Activated CD4-positive, alpha-beta memory T cell treated with anti-CD3 and anti-CD28 coated beads for 36 hours (primary cell): ENCODE measurements at regions of chr17 and their contacts with region 1.

Region 1: DNA sequence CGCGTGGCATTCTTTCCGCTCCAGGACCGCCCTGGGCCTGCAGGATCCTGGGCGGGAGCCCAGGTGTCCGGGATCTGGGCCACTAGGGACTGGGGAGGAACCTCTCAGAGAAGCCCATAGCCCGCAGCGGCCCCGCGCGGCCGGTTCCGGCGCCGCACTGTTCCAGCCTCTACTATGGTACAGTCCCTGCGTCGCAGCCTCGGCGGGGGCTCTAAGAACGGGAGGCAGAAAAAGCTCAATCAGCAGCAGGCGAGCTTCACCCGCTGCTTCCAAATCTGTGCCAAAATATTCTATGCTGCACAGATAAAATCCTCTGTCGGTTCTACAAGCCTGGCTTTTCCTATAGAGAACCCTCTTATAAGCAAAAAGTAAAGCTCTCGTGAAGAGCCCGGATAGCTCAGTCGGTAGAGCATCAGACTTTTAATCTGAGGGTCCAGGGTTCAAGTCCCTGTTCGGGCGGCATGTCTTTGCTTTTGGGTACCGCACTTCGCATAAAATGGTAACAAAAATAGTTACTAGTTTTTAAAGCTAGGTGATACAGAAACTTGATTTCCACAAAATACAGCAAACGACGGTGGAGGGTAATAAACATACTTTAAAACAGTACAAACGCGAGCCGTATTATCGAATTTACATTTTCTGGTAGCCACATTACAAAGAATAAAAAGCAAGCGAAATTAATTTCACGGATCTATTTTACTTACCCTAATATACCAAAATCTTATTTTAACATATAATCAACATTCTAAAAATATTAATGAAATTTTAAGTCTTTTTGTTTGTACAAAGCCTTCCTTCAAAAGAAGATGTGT is 661 bp upstream of the ALOXE3 start:
- DNase-seq: peak; percentile 90
- H3K4me3 Mint-ChIP-seq: peak overlapping the region; percentile 83
- H3K27ac Mint-ChIP-seq: peak overlapping the region; percentile 91
- H3K4me1 Mint-ChIP-seq: peaks cover 48% of the 10 kb centered on the region
- H3K27me3 Mint-ChIP-seq: peaks cover 56% of the 10 kb centered on the region

Region 2: GRCh38 chr17:7435221-7435675 is 683.7 kb before region 1 on chr17 and contains the start of gene TMEM102:
- CTCF ChIA-PET with region 1: no interaction called
- POLR2A ChIA-PET with region 1: no interaction called
- intact Hi-C with region 1: loop called (anchors 10 kb)
- DNase-seq: peak; percentile 99
- H3K4me3 Mint-ChIP-seq: peak within 1 kb of the TSS; percentile 91
- H3K27ac Mint-ChIP-seq: peak within 1 kb of the TSS; percentile 95
- H3K4me1 Mint-ChIP-seq: peaks cover 36% of the 10 kb centered on the region
- H3K27me3 Mint-ChIP-seq: peaks cover 15% of the 10 kb centered on the region
- total RNA-seq, gene TMEM102: 11.4 to 11.6 TPM

Region 3: GRCh38 chr17:7887482-7888183 is 231.3 kb before region 1 on chr17:
- CTCF ChIA-PET with region 1: no interaction called
- POLR2A ChIA-PET with region 1: no interaction called
- intact Hi-C with region 1: loop called (anchors 1 kb)
- DNase-seq: peak; percentile 95
- H3K4me3 Mint-ChIP-seq: no peak overlapping the region
- H3K27ac Mint-ChIP-seq: no peak overlapping the region
- H3K4me1 Mint-ChIP-seq: no peaks in the 10 kb centered on the region
- H3K27me3 Mint-ChIP-seq: no peaks in the 10 kb centered on the region

Region 4: GRCh38 chr17:8073627-8074484 is 45.1 kb before region 1 on chr17:
- CTCF ChIA-PET with region 1: interaction called, 42 read pairs
- POLR2A ChIA-PET with region 1: interaction called, 3 read pairs
- intact Hi-C with region 1: loop called (anchors 1 kb)
- DNase-seq: peak; percentile 91
- H3K4me3 Mint-ChIP-seq: peak overlapping the region; percentile 70
- H3K27ac Mint-ChIP-seq: no peak overlapping the region
- H3K4me1 Mint-ChIP-seq: peaks cover 18% of the 10 kb centered on the region
- H3K27me3 Mint-ChIP-seq: peaks cover 40% of the 10 kb centered on the region

Region 5: DNA sequence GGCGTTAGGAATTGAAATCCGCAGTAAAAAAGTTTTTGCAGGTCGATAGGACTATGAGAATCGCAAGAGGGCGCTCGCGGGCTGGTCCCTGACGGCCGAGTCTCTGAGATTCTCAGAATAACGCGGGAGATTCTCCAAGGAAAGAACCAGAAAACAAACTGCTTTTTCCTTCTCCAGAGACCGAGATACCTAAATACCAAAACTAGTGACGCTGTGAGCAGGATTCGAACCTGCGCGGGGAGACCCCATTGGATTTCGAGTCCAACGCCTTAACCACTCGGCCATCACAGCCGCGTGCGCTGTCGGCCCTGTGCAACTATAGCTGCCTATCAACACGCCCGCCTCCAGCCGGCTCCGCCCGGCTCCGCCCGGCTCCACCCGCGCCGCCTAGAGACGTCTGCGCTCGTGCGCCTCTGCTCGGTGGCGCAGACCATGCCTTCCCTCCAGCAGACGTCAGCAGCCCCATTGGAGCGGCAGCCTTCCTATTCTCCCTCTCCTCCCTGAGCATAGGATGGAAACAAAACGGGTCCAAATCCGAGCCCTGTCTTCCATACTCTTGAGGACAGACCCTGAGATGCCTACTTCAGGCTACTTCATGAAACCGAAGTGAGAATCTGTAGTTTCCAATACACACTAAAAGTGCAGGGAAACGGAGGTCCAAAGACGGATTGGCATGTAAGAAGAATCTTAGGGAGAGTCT is 19.8 kb after region 1 on chr17:
- CTCF ChIA-PET with region 1: interaction called, 35 read pairs
- POLR2A ChIA-PET with region 1: interaction called, 4 read pairs
- intact Hi-C with region 1: loop called (anchors 1 kb)
- DNase-seq: peak; percentile 98
- H3K4me3 Mint-ChIP-seq: no peak overlapping the region
- H3K27ac Mint-ChIP-seq: no peak overlapping the region
- H3K4me1 Mint-ChIP-seq: peaks cover 2% of the 10 kb centered on the region
- H3K27me3 Mint-ChIP-seq: peaks cover 1% of the 10 kb centered on the region

Region 6: GRCh38 chr17:8173056-8173870 is 54.3 kb after region 1 on chr17:
- CTCF ChIA-PET with region 1: interaction called, 6 read pairs
- POLR2A ChIA-PET with region 1: interaction called, 52 read pairs
- intact Hi-C with region 1: loop called (anchors 1 kb)
- DNase-seq: peak; percentile 89
- H3K4me3 Mint-ChIP-seq: peak overlapping the region; percentile 77
- H3K27ac Mint-ChIP-seq: peak overlapping the region; percentile 98
- H3K4me1 Mint-ChIP-seq: peaks cover 40% of the 10 kb centered on the region
- H3K27me3 Mint-ChIP-seq: peaks cover 4% of the 10 kb centered on the region

Region 7: GRCh38 chr17:8248751-8249607 is 130.0 kb after region 1 on chr17 and contains the start of gene PFAS:
- CTCF ChIA-PET with region 1: interaction called, 12 read pairs
- POLR2A ChIA-PET with region 1: interaction called, 14 read pairs
- intact Hi-C with region 1: loop called (anchors 2 kb)
- DNase-seq: peak; percentile 98
- H3K4me3 Mint-ChIP-seq: peak within 1 kb of the TSS; percentile 99
- H3K27ac Mint-ChIP-seq: peak within 1 kb of the TSS; percentile 97
- H3K4me1 Mint-ChIP-seq: peaks cover 38% of the 10 kb centered on the region
- H3K27me3 Mint-ChIP-seq: no peaks in the 10 kb centered on the region
- total RNA-seq, gene PFAS: 102 to 105 TPM

Region 8: GRCh38 chr17:8326511-8327302 is 207.7 kb after region 1 on chr17:
- CTCF ChIA-PET with region 1: no interaction called
- POLR2A ChIA-PET with region 1: no interaction called
- intact Hi-C with region 1: no loop called
- DNase-seq: peak; percentile 38
- H3K4me3 Mint-ChIP-seq: peak overlapping the region; percentile 61
- H3K27ac Mint-ChIP-seq: no peak overlapping the region
- H3K4me1 Mint-ChIP-seq: peaks cover 14% of the 10 kb centered on the region
- H3K27me3 Mint-ChIP-seq: peaks cover 42% of the 10 kb centered on the region

Region 9: DNA sequence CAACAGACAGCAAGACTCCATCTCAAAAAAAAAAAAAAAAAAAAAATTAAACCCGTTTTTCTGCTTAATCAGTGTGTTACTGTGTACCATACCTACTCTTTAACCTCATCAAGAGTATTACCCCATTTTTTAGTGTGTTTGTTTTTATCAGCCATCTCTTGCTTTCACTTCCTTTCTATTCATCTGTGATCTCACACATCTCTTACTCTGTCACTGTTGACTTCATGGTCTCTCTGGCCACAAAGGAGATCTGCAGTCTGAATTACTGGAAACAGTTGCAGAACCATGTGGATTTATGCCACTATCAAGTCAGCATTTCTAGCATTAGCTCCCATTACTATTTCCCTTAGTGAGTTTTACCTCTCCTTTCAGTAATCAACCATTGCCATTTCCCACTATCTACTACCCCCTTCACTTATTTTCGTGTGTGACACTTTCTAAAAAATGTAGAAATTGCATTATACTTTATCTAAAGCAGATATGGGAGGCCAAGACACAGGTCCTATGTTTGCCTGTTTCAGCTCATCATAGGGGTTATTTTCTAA is 336.8 kb after region 1 on chr17:
- CTCF ChIA-PET with region 1: no interaction called
- POLR2A ChIA-PET with region 1: no interaction called
- intact Hi-C with region 1: no loop called
- DNase-seq: no peak
- H3K4me3 Mint-ChIP-seq: no peak overlapping the region
- H3K27ac Mint-ChIP-seq: peak overlapping the region; percentile 6
- H3K4me1 Mint-ChIP-seq: peaks cover 15% of the 10 kb centered on the region
- H3K27me3 Mint-ChIP-seq: no peaks in the 10 kb centered on the region